ENCODE measurements at regions of chr22 and their contacts with region 1.

Region 1: GRCh38 chr22:37608477-37609239 is at the start of gene GGA1:
- DNase-seq: peak; percentile 98

Region 2: GRCh38 chr22:37538590-37539357 is 69.9 kb before region 1 on chr22:
- CTCF ChIA-PET with region 1: interaction called, 23 read pairs
- POLR2A ChIA-PET with region 1: interaction called, 12 read pairs
- DNase-seq: peak; percentile 99

Region 3: GRCh38 chr22:37588546-37589215 is 20.0 kb before region 1 on chr22:
- CTCF ChIA-PET with region 1: interaction called, 47 read pairs
- POLR2A ChIA-PET with region 1: interaction called, 32 read pairs
- DNase-seq: no peak

Region 4: DNA sequence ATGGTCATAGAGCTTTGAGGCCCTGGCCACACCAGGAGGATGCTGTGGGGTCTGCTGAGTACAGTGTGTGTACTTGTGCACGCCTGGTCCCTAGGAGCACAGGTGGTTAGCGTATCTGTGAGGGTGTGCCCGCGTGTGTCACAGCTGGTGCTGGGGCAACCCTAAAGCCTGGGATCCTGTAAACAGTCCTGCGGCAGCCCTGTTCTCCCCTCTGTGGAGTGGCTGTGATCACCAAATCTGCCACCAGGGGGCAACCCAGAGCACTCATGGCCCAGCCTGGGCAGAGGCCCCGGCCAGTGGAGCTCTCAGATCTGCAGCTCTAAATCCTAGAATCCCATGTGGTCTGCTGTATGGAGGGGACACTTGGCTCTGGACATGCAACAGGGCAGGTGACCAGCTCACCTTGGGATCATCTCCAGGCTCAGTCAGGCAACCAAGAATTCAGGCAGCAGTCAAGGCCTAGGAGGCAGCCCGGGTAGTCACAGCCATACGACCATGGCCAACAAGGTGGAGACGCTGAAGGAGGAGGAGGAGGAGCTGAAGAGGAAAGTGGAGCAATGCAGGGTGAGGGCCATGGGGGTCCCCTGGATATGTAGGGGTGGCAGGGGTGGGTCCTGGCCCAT is 34.7 kb after region 1 on chr22:
- CTCF ChIA-PET with region 1: interaction called, 10 read pairs
- POLR2A ChIA-PET with region 1: interaction called, 15 read pairs
- DNase-seq: peak; percentile 93

Region 5: GRCh38 chr22:37686002-37686982 is 77.6 kb after region 1 on chr22 and contains the start of gene NOL12:
- CTCF ChIA-PET with region 1: interaction called, 4 read pairs
- POLR2A ChIA-PET with region 1: interaction called, 14 read pairs
- DNase-seq: peak; percentile 92

Measured in HEK293T (cell line).